Activated CD4-positive, alpha-beta memory T cell treated with anti-CD3 and anti-CD28 coated beads, Interleukin-2, amount 10 ng/mL, durations not matched to agents 7 days and 5 days (primary cell): ENCODE measurements at regions of chr19 and their contacts with region 1.

Region 1: GRCh38 chr19:8321060-8321985 is at the starts of genes NDUFA7 and RPS28:
- DNase-seq: peak; percentile 98
- H3K4me3 Mint-ChIP-seq: peak within 1 kb of the TSS; percentile 92
- H3K27ac Mint-ChIP-seq: peak within 1 kb of the TSS; percentile 96
- H3K4me1 Mint-ChIP-seq: peaks cover 38% of the 10 kb centered on the region
- H3K27me3 Mint-ChIP-seq: no peaks in the 10 kb centered on the region
- total RNA-seq, gene NDUFA7: 67.1 to 67.3 TPM
- total RNA-seq, gene RPS28: 1,605 to 1,659 TPM

Region 2: GRCh38 chr19:8141726-8142512 is 179.4 kb before region 1 on chr19:
- CTCF ChIA-PET with region 1: no interaction called
- POLR2A ChIA-PET with region 1: no interaction called
- DNase-seq: no peak
- H3K4me3 Mint-ChIP-seq: no peak overlapping the region
- H3K27ac Mint-ChIP-seq: no peak overlapping the region
- H3K4me1 Mint-ChIP-seq: no peaks in the 10 kb centered on the region
- H3K27me3 Mint-ChIP-seq: peaks cover 6% of the 10 kb centered on the region

Region 3: DNA sequence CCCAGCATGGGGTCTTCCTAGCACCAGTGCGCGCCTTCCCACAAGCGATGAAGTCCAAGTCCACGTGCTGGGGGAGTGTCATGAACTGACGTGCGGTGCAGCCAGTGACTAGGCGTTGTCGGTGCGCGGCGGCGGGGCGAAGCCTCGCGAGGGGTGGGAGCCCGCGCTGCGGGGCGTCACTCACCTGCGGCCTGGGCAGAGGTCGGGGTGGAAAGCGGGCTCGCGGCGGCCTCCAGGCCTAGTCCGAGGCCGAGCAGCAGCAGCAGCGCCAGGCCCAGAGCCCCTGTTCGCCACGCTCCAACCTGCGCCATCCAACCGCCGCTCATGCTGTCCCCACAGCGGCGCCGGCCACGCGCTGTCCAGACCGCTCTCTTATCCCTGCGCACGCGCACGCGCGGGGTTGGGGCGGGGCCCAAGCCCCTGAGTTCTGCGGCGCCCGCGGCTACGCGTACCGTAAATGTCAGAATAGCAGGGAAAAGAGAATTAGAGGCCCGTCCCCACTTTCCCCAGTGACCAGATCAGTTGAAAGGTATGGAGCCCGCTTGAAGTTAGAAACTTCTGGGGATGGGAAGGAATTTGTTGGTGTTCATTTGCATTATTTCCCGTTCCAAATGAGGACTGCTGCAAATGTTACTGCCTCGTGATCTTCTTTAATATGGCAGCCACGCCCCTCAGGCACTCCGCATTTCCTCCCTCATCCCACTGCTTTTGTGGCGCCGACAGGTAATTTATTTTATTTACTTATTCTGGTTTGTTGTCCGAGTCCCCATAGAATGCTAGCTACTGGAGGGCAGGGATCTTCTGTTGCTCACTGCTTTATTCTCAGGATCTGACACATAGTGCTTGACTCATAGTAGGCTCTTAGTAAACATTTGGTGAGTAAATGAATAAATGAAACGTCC is 13.1 kb before region 1 on chr19 and contains the start of gene CD320:
- CTCF ChIA-PET with region 1: interaction called, 5 read pairs
- POLR2A ChIA-PET with region 1: interaction called, 25 read pairs
- DNase-seq: peak; percentile 88
- H3K4me3 Mint-ChIP-seq: peak within 1 kb of the TSS; percentile 90
- H3K27ac Mint-ChIP-seq: peak within 1 kb of the TSS; percentile 76
- H3K4me1 Mint-ChIP-seq: peaks cover 39% of the 10 kb centered on the region
- H3K27me3 Mint-ChIP-seq: no peaks in the 10 kb centered on the region
- total RNA-seq, gene CD320: 37.7 to 40.4 TPM

Region 4: GRCh38 chr19:8334458-8335342 is 13.4 kb after region 1 on chr19:
- CTCF ChIA-PET with region 1: interaction called, 3 read pairs
- POLR2A ChIA-PET with region 1: interaction called, 51 read pairs
- DNase-seq: peak; percentile 48
- H3K4me3 Mint-ChIP-seq: peak overlapping the region; percentile 21
- H3K27ac Mint-ChIP-seq: no peak overlapping the region
- H3K4me1 Mint-ChIP-seq: peaks cover 9% of the 10 kb centered on the region
- H3K27me3 Mint-ChIP-seq: peaks cover 28% of the 10 kb centered on the region

Region 5: DNA sequence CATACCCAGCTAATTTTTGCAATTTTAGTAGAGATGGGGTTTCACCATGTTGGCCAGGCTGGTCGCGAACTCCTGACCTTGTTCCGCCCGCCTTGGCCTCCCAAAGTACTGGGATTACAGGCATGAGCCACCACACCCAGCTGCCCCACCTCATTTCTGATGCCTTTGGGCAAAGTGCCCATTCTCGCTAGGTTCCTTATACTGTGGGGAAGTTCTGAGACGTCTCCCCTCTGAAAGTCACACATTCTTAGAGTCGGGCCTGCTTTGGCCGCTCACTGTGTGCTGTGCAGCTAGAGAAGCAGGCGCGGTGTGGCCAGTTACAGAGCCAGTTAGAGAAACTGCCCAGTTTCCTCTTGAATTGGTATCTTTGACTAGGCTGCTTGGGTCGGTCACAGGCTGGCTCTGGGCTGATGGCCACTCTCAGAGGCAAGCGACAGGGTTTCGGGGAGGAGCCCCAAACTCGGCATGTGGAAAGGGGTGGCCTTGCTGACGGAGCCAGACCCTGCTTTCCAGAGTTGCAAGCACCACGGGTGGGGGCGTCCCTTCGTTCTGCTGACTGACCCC is 163.1 kb after region 1 on chr19:
- CTCF ChIA-PET with region 1: no interaction called
- POLR2A ChIA-PET with region 1: no interaction called
- DNase-seq: no peak
- H3K4me3 Mint-ChIP-seq: no peak overlapping the region
- H3K27ac Mint-ChIP-seq: no peak overlapping the region
- H3K4me1 Mint-ChIP-seq: peaks cover 43% of the 10 kb centered on the region
- H3K27me3 Mint-ChIP-seq: no peaks in the 10 kb centered on the region